Activated CD4-positive, alpha-beta memory T cell treated with anti-CD3 and anti-CD28 coated beads, Interleukin-2, amount 10 ng/mL, durations not matched to agents 7 days and 5 days (primary cell): ENCODE measurements at regions of chr1 and their contacts with region 1.

Region 1: DNA sequence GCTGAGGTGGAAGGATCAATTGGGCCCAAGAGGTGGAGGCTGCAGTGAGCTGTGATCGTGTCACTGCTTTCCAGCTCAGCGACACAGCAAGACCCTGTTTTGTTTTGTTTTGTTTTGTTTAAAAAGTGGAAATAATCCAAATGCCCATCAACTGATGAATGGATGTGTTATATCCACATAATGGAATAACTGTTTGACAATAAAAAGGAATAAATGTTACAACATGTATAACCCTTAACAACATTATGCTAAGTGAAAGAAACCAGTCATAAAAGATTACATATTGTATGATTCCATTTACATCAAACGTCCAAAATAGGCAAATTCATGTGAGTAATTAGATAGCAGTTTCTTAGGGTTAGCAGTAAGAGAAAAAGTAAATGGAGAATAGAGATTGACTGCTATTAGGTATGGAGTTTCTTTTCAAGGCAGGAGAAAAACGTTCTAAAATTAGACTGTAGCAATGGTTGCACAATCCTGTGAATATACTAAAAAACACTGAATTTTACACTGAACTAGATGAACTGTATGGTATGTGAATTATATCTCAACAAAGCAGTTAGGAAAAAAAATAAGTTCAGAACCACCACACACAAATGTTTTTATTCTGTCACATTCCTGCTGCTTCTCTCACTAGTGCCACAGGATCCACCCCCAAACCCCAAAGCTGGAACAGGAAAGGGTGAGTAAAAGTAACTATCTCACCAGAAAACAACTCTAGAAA is 15.7 kb downstream of the FOXJ3 start:
- DNase-seq: no peak
- H3K4me3 Mint-ChIP-seq: peak overlapping the region; percentile 48
- H3K27ac Mint-ChIP-seq: peak overlapping the region; percentile 78
- H3K4me1 Mint-ChIP-seq: peaks cover 74% of the 10 kb centered on the region
- H3K27me3 Mint-ChIP-seq: no peaks in the 10 kb centered on the region

Region 2: GRCh38 chr1:42305639-42306038 is 13.7 kb before region 1 on chr1:
- CTCF ChIA-PET with region 1: no interaction called
- POLR2A ChIA-PET with region 1: no interaction called
- DNase-seq: no peak
- H3K4me3 Mint-ChIP-seq: no peak overlapping the region
- H3K27ac Mint-ChIP-seq: no peak overlapping the region
- H3K4me1 Mint-ChIP-seq: peaks cover 16% of the 10 kb centered on the region
- H3K27me3 Mint-ChIP-seq: no peaks in the 10 kb centered on the region

Region 3: GRCh38 chr1:42335050-42335808 is 15.9 kb after region 1 on chr1 and contains the start of gene FOXJ3:
- CTCF ChIA-PET with region 1: interaction called, 3 read pairs
- POLR2A ChIA-PET with region 1: interaction called, 16 read pairs
- DNase-seq: peak; percentile 92
- H3K4me3 Mint-ChIP-seq: peak within 1 kb of the TSS; percentile 92
- H3K27ac Mint-ChIP-seq: peak within 1 kb of the TSS; percentile 84
- H3K4me1 Mint-ChIP-seq: peaks cover 49% of the 10 kb centered on the region
- H3K27me3 Mint-ChIP-seq: no peaks in the 10 kb centered on the region
- total RNA-seq, gene FOXJ3: 44.9 to 47.1 TPM